ENCODE measurements at regions of chr1 and their contacts with region 1.

Region 1: DNA sequence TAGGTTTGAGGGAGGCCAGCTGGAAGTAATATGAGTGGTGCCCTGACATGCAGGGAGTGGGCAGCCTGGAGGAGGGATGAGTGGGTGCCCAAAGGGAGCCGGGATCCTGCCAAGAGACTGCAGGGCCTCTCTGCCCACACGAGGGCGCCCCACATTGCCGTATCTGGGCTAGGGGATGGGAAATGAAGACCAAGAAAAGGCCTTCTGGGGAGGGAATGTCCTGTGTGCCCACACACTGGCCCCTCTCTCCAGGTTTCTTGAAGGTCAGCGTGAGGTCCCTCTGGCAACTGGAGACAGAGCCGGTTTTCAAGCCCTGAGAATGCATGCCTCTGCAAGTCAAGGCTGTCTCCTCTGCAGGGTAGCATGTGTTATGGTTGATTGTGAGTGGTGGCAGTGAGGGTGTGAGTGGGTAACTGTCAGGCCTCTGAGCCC is 94.1 kb upstream of the PPM1J start:
- DNase-seq: peak; percentile 86
- ATAC-seq: peak; percentile 87

Region 2: GRCh38 chr1:112722601-112723510 is 86.4 kb before region 1 on chr1:
- intact Hi-C with region 1: loop called (anchors 5 kb)
- DNase-seq: no peak
- ATAC-seq: peak; percentile 81

Region 3: GRCh38 chr1:113021430-113022086 is 212.3 kb after region 1 on chr1:
- intact Hi-C with region 1: no loop called
- DNase-seq: no peak
- ATAC-seq: peak; percentile 72

Region 4: GRCh38 chr1:113042285-113043143 is 233.2 kb after region 1 on chr1:
- intact Hi-C with region 1: loop called (anchors 5 kb)
- DNase-seq: peak; percentile 86
- ATAC-seq: peak; percentile 94

Region 5: DNA sequence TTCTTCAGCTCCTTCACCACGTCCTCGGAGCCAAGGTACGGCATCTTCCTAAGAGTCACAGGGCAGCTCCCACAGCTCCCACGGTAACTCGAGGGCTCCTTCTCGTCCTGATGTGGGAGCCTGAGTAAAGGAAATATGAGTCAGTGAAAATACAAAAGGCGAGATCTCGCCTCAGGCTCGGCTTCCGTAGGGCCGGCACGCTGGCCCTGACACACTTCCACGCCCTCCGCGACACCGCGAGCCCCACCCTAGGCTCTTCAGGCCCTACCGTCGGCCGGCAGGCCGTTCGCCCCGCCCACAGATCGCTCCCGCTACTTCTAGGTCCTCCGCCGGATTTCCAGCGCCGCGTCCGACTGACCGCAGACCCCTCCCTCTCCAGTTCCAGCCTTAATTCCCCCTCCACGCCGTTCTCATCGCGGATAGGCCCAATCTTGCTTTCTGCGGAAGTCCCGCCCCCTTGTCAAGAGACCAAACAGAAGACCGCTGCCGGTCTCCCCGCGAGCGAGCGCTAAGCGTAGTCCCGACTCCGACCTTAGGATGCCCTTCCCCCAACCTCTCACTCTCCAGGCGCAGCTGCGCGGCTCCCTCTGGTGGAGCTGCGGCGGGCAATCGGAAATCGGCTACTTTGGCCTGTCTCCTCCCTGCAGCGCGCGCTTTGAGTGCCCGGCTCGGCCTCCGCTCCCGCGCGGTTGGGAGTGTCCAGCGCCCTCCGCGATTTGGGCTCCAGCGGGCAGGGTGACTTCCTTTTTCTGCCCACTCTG is 1095.6 kb after region 1 on chr1 and contains the starts of genes AP4B1 and DCLRE1B:
- intact Hi-C with region 1: loop called (anchors 5 kb)
- DNase-seq: peak; percentile 99
- ATAC-seq: peak; percentile 99
- total RNA-seq, gene AP4B1: 21.2 TPM
- total RNA-seq, gene DCLRE1B: 5.3 TPM

Region 6: GRCh38 chr1:113963281-113963906 is 1154.1 kb after region 1 on chr1:
- intact Hi-C with region 1: no loop called
- DNase-seq: no peak
- ATAC-seq: no peak